Transverse colon (tissue), 4 donors: ENCODE measurements at regions of chr20 and their contacts with region 1.

Region 1: DNA sequence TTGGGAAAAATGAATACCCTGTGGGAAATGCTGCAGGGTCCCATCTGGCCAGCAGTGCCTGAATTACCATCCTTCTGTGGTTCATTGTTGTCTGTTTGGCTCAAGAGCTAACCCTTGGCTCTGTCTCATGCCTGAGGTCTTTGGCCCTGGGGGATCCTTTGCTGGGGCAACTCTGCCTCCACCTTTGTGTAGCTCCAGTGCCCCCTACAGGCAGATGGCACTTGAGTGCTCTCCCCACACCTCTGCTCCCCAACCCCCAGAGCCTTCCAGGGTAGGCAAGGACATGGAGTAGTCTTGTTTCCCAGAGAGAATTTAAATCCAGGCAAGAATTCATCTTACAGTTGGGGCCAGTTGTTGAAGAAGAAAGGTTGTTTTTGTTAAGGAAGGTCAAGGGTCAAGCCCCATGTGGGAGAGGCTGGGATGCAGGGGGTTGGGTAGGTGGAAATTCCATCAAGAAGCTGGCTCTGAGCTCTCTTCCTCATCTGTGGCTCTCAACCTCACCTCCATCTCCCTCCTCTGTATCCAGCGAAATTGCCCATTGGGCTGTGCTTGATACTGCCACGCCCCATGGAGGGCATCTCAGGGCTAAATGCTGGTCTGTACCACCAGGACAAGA is 44.2 kb downstream of the ZNF831 start:
- DNase-seq: peak; percentile 81
- H3K4me3 ChIP-seq: no peak overlapping the region
- H3K27ac ChIP-seq: no peak overlapping the region
- H3K4me1 ChIP-seq: no peaks in the 10 kb centered on the region
- H3K27me3 ChIP-seq: no peaks in the 10 kb centered on the region
- CTCF ChIP-seq: peak; percentile 54 to 80 (median 65)
- EP300 ChIP-seq: no peak
- POLR2A ChIP-seq: no peak

Region 2: GRCh38 chr20:58150772-58151171 is 1057.1 kb before region 1 on chr20:
- in situ Hi-C with region 1: no loop called
- intact Hi-C with region 1: no loop called
- DNase-seq: peak; percentile 63
- H3K4me3 ChIP-seq: no peak overlapping the region
- H3K27ac ChIP-seq: no peak overlapping the region
- H3K4me1 ChIP-seq: no peaks in the 10 kb centered on the region
- H3K27me3 ChIP-seq: peaks cover 15% of the 10 kb centered on the region
- CTCF ChIP-seq: no peak
- EP300 ChIP-seq: no peak
- POLR2A ChIP-seq: no peak

Region 3: GRCh38 chr20:59094576-59094975 is 113.3 kb before region 1 on chr20:
- in situ Hi-C with region 1: loop called in 2 of 4 experiments (anchors 5 kb)
- intact Hi-C with region 1: no loop called
- DNase-seq: no peak
- H3K4me3 ChIP-seq: no peak overlapping the region
- H3K27ac ChIP-seq: no peak overlapping the region
- H3K4me1 ChIP-seq: no peaks in the 10 kb centered on the region
- H3K27me3 ChIP-seq: no peaks in the 10 kb centered on the region
- CTCF ChIP-seq: no peak
- EP300 ChIP-seq: no peak
- POLR2A ChIP-seq: no peak

Region 4: DNA sequence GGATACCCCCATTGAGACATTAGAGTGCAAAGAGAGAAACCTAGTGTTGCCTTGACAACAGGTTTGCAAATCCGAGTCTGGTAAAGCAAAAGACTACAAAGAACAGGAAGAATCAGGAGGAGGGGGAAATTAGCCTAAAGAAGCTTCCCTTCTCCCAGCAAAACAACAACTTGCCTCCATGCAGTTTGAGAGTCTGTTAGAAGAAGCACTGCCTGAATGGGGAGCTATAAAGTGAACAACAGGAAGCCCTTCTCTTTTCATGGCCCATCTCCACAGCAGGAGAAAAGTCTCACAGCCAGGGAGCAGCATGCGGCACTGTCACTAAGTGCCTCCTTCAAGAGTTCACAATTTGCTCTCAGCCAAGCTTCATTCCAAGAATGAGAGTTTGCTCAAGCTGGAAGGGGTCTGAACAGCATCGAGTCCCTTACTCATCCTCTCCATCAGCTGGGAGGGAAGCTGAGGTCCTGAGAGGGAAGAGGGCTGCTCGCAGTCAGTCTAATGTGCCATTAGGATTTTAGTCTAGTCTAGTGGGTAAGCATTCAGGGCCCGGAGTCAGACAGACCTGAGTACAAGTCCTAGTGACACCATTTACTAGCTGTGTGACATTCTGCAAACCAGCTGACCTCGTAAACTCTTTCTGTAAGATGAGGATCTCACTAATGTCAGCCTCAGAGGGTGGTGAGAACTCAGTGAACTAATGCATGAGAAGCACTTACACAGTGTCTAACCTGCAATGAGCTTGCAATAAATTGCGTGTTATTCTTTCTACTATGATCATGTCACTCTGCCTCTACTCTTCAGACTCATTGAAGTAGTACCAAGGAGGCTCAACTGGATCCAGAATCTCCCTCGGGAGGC is 85.6 kb before region 1 on chr20:
- in situ Hi-C with region 1: no loop called
- intact Hi-C with region 1: no loop called
- DNase-seq: no peak
- H3K4me3 ChIP-seq: no peak overlapping the region
- H3K27ac ChIP-seq: peak overlapping the region in 3 of 4 donors; percentile 16 to 43 (median 35)
- H3K4me1 ChIP-seq: peaks cover 0 to 12% (median 0%) of the 10 kb centered on the region in 4 donors
- H3K27me3 ChIP-seq: peaks cover 4% of the 10 kb centered on the region
- CTCF ChIP-seq: no peak
- EP300 ChIP-seq: no peak
- POLR2A ChIP-seq: no peak